Activated CD4-positive, alpha-beta T cell treated with anti-CD3 and anti-CD28 coated beads, Interleukin-2, amount 10 ng/mL, durations not matched to agents 24 days and 14 days (primary cell): ENCODE measurements at regions of chr1 and their contacts with region 1.

Region 1: GRCh38 chr1:167474191-167474716 is 44.1 kb downstream of the CD247 start:
- DNase-seq: no peak
- H3K4me3 Mint-ChIP-seq: peak overlapping the region; percentile 61
- H3K27ac Mint-ChIP-seq: peak overlapping the region; percentile 70
- H3K4me1 Mint-ChIP-seq: peaks cover 67% of the 10 kb centered on the region
- H3K27me3 Mint-ChIP-seq: no peaks in the 10 kb centered on the region

Region 2: DNA sequence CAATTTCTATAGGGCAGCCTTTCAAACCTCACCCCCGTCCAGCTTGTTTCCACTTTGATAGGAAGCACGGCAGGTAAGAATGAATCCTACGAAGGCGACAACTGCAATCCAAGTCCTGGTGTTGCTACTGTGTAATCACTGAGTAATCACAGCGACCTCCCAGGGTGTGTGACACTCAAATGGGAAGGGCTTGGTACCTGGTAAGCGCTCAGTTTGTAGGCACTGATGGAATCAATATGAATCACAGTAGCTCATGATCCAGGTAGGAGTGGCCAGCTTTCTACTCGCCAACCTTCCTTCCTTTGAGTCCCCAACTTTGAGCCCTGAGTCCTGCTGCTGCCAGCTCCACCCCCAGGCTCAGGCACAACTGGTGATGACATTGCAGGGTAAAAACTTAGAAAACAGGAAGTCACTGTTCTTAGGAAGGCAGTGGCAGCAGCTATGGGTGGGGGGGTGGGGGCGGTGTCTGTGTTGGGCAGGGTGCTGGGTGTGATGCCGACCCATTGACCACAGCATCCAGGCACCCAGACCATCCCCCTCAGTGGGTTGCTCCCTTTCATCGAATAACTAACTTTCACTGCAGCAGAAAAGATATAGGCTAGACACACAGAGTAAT is 26.6 kb before region 1 on chr1:
- intact Hi-C with region 1: loop called (anchors 2 kb)
- DNase-seq: peak; percentile 92
- H3K4me3 Mint-ChIP-seq: peak overlapping the region; percentile 79
- H3K27ac Mint-ChIP-seq: peak overlapping the region; percentile 93
- H3K4me1 Mint-ChIP-seq: peaks cover 66% of the 10 kb centered on the region
- H3K27me3 Mint-ChIP-seq: no peaks in the 10 kb centered on the region

Region 3: DNA sequence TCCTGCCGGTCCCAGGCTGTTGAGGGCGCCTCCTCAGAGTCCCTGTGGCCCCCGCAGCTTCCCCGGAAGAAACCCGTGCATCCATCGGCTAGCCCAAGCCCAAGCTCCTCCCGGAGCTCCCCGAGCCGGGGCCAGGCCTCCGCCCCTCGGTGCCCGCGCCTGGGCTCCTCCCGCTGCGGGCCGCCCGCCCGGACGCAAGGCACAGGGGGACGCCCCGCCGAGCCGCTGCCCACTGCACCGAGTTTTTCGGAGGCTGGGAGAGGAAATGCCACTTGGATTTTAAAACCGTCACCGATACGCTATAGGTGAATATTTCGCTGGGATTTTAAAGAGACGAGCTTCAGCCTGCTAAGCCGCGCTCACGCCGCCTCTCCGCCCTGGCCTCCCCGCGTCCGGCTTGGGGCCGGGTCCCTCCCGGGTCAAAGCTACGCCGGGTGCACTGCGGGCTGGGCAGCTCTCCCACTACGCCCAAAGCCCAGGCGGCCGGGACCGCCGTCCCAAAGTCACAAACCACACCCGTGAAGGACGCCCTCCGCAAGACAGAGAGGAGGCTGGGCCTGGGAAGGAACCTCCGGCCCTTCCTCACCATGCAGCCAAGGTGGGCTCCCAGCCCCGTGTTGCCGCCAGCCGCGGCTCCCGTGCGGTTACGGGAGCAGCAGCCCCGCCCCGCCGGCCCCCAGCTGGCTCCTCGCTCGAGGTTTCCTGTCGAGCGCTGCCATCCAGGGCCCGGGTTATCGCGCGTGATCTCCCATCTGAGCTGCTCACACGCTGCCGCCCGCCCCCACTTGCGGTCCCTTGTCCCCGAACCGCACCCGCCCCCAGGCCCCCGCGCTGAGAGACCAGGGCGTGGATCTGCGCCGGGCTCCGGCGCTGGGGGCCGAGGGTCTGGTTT is 19.1 kb before region 1 on chr1:
- intact Hi-C with region 1: loop called (anchors 1 kb)
- DNase-seq: peak; percentile 94
- H3K4me3 Mint-ChIP-seq: peak overlapping the region; percentile 86
- H3K27ac Mint-ChIP-seq: peak overlapping the region; percentile 77
- H3K4me1 Mint-ChIP-seq: peaks cover 50% of the 10 kb centered on the region
- H3K27me3 Mint-ChIP-seq: no peaks in the 10 kb centered on the region

Region 4: GRCh38 chr1:167486090-167486824 is 12.0 kb after region 1 on chr1:
- intact Hi-C with region 1: loop called (anchors 1 kb)
- DNase-seq: no peak
- H3K4me3 Mint-ChIP-seq: peak overlapping the region; percentile 57
- H3K27ac Mint-ChIP-seq: peak overlapping the region; percentile 86
- H3K4me1 Mint-ChIP-seq: peaks cover 89% of the 10 kb centered on the region
- H3K27me3 Mint-ChIP-seq: no peaks in the 10 kb centered on the region

Region 5: DNA sequence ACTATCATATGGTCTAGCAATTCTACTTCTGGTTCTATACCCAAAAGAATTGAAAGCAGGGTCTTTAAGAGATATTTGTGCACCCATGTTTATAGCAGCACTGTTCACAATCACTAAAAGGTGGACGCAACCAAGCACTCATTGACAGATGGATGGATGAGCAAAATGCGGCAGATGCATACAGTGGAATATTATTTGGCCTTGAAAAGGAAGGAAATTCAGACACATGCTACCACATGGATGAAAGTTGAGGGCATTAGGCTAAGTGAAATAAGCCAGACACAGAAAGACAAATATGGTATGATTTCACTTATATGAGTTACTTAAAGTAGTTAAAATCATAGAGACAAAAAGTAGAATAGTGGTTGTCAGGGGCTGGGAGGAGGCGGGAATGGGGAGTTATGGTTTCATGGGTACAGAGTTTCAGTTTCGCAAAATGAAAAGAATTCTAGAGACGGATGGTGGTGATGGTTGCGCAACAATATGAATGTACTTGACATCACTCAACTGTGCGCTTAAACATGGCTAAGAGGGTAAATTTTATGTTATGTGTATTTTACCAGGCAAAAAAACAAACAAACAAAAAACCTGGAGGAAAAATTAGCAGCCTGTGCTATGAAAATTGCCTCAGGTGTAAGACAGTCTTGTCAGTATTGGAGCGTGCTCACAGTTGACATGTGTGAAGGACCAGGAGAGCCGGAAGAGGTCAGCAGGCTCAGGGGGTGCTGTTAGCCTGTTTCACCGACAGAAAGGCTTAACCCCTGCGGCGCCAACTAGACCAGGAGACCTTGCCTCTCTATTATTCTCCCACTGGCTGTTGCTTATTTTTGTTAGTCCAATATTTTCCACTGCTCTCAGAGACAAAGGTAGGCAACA is 17.6 kb after region 1 on chr1:
- intact Hi-C with region 1: loop called (anchors 1 kb)
- DNase-seq: peak; percentile 83
- H3K4me3 Mint-ChIP-seq: peak overlapping the region; percentile 79
- H3K27ac Mint-ChIP-seq: peak overlapping the region; percentile 94
- H3K4me1 Mint-ChIP-seq: peaks cover 84% of the 10 kb centered on the region
- H3K27me3 Mint-ChIP-seq: no peaks in the 10 kb centered on the region

Region 6: DNA sequence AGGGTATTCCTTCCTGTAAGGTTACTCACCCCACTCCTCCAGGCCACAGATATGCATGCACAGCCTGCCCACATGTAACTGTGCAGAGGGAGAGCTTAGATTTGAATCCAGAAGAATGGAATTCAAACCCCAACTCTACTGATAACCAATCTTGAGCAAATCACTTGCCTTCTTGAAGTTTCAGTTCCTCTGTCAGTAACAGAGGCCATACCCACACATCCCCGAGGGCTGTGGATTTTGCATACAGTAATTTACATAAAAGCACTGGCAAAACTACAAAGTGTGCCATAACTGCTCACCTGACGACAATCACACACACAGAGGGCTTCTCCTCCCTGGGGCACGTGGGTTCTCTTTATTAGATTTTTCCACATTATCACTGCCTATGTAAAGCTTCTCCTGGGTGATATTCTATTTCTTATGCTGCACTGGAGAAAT is 25.4 kb after region 1 on chr1:
- intact Hi-C with region 1: loop called (anchors 1 kb)
- DNase-seq: peak; percentile 77
- H3K4me3 Mint-ChIP-seq: peak overlapping the region; percentile 76
- H3K27ac Mint-ChIP-seq: peak overlapping the region; percentile 95
- H3K4me1 Mint-ChIP-seq: peaks cover 93% of the 10 kb centered on the region
- H3K27me3 Mint-ChIP-seq: no peaks in the 10 kb centered on the region